Ascending aorta (tissue), 2 donors: ENCODE measurements at regions of chr1 and their contacts with region 1.

Region 1: GRCh38 chr1:36450270-36450918 is at the start of gene OSCP1:
- DNase-seq: peak; percentile 75 to 97
- H3K4me3 ChIP-seq: peak within 1 kb of the TSS; percentile 55 to 82
- H3K27ac ChIP-seq: peak within 1 kb of the TSS; percentile 95 to 97
- H3K4me1 ChIP-seq: peaks cover 3 to 8% of the 10 kb centered on the region in 2 donors
- H3K27me3 ChIP-seq: no peaks in the 10 kb centered on the region
- CTCF ChIP-seq: no peak
- total RNA-seq, gene OSCP1: 10.6 TPM

Region 2: GRCh38 chr1:36080801-36081200 is 369.6 kb before region 1 on chr1:
- intact Hi-C with region 1: no loop called
- DNase-seq: no peak
- H3K4me3 ChIP-seq: no peak overlapping the region
- H3K27ac ChIP-seq: no peak overlapping the region
- H3K4me1 ChIP-seq: peaks cover 2 to 5% of the 10 kb centered on the region in 2 donors
- H3K27me3 ChIP-seq: no peaks in the 10 kb centered on the region
- CTCF ChIP-seq: no peak

Region 3: DNA sequence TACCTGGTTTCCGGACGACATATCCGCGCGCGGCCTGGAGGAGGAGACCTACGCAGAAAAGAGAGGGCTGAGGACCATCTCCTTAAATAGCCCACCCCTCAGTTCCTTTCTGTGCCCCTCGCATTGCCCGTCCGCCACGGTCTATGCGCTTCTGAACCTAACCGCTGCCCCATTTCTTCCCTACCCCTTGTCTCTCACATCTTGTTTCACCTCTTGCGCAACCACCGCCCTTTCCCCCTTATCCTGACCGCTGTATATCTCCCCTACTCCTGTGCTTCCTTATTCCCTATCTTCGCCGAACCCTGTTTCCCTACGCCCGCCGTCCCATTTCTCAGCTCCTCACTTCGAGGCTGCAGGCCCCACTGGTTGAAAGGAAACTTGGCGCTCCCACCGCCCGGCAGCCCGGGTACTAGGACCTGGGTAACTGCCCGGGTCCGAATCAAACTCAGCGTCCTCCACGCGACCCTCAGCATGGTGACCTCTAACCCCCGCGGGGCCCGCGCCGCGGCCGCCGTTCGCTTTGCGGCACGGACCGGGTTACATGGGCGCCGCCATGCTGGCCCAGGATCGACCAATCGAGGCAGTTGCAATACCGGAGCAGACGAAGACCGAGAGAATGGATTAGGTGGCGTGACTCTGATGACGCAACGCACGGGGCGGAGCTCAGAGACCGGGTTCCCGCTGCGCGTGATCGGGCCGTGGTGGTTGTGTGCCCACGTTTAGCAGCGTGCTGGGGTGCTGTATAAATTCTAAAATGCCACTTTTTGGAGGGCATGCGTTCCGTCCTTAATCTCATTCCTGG is 13.6 kb after region 1 on chr1 and contains the start of gene MRPS15:
- intact Hi-C with region 1: loop called (anchors 2 kb)
- DNase-seq: peak; percentile 87 to 97
- H3K4me3 ChIP-seq: peak within 1 kb of the TSS; percentile 70 to 72
- H3K27ac ChIP-seq: peak within 1 kb of the TSS; percentile 87 to 90
- H3K4me1 ChIP-seq: peaks cover 3 to 11% of the 10 kb centered on the region in 2 donors
- H3K27me3 ChIP-seq: no peaks in the 10 kb centered on the region
- CTCF ChIP-seq: no peak
- total RNA-seq, gene MRPS15: 30.4 TPM